ENCODE measurements at regions of chr3 and their contacts with region 1.

Region 1: GRCh38 chr3:50347194-50347918 is 1.8 kb upstream of the ZMYND10 start:
- ATAC-seq: peak in 6 of 8 experiments; percentile 3 to 16 (median 4)
- H3K4me3 ChIP-seq: no peak overlapping the region
- H3K27ac ChIP-seq: no peak overlapping the region
- H3K4me1 ChIP-seq: peaks cover 22 to 31% of the 10 kb centered on the region in 2 donors

Region 2: GRCh38 chr3:50550079-50550741 is 202.9 kb after region 1 on chr3:
- in situ Hi-C with region 1: loop called in 3 of 9 experiments (anchors 10 kb)
- ATAC-seq: peak; percentile 60 to 87 (median 68)
- H3K4me3 ChIP-seq: no peak overlapping the region
- H3K27ac ChIP-seq: no peak overlapping the region
- H3K4me1 ChIP-seq: peaks cover 8 to 11% of the 10 kb centered on the region in 2 donors

Measured in motor neuron (in vitro differentiated cells).